ENCODE measurements at regions of chr1 and their contacts with region 1.

Region 1: DNA sequence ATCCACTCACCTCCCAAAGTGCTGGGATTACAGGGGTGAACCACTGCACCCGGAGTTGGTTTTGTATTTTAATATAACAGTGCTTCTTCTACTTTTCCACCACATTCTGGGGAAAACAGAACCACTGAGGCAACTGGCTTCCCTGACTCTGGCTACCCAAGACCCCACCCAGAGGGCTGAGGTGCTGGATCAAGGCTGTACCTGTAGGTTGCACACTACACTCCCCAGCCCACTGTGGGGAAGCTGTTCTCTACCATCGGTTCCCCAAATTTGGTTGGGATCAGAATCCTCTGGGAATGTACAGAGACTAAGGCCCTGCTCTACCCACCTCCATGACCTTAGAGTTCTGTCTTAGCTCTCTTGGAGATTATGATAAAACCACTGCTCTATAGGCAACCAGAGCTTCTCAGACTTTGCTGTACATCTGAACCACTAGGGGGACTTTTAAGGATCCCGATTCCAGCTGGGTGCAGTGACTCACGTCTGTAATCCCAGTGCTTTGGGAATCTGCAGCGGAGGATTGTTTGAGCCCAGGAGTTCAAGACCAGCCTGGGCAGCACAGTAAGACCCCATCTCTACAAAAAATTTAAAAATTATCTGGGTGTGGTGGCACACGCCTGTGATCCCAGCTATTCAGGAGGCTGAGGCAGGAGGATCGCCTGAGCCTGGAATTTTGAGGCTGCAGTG is 51.6 kb downstream of the GNG4 start:
- DNase-seq: no peak
- H3K4me3 ChIP-seq: no peak overlapping the region
- H3K27ac ChIP-seq: no peak overlapping the region
- H3K4me1 ChIP-seq: peaks cover 0 to 9% (median 0%) of the 10 kb centered on the region in 4 experiments; a peak in 2 of 7 replicates
- H3K27me3 ChIP-seq: no peaks in the 10 kb centered on the region
- CTCF ChIP-seq: peak in 2 of 3 experiments; percentile 25 to 48; a peak in 3 of 4 replicates
- EP300 ChIP-seq: no peak
- POLR2A ChIP-seq: no peak
- RAD21 ChIP-seq: peak in 1 of 2 experiments; percentile 34; a peak in 2 of 4 replicates

Region 2: DNA sequence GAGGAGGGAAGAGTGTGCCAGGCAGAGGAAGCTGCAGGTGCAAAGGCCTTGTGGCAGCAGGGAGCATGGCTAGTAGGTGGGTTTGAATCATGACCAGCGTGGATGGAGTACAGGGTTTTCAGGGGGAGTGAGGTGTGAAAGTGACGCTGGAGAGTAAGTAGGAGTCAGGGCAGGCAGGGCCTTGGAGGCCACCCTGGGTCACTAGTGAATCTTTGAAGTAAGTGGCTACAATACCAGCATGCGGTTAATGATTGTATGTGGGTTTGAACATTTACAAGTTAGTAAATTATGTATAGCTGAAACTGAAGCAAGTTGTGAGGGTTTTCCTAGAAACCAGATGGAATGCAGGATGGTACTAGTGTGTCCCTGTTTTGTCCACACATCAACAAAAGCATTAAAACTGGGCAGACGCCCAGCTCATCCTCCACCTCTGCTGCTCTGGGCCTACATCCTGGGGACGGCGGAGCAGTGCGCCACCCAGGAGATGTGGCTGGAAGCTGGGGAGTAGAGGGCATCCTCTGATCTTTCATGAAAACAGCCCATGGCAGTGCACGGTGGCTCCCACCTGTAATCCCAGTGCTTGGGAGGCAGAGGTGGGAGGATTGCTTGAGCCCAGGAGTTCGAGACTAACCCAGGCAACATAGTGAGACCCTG is 52.6 kb before region 1 on chr1:
- CTCF ChIA-PET with region 1: interaction called, 19 read pairs
- POLR2A ChIA-PET with region 1: no interaction called
- DNase-seq: no peak
- H3K4me3 ChIP-seq: no peak overlapping the region
- H3K27ac ChIP-seq: no peak overlapping the region
- H3K4me1 ChIP-seq: peaks cover 3 to 7% (median 5%) of the 10 kb centered on the region in 4 experiments
- H3K27me3 ChIP-seq: no peaks in the 10 kb centered on the region
- CTCF ChIP-seq: no peak
- EP300 ChIP-seq: no peak
- POLR2A ChIP-seq: no peak
- RAD21 ChIP-seq: no peak

Region 3: DNA sequence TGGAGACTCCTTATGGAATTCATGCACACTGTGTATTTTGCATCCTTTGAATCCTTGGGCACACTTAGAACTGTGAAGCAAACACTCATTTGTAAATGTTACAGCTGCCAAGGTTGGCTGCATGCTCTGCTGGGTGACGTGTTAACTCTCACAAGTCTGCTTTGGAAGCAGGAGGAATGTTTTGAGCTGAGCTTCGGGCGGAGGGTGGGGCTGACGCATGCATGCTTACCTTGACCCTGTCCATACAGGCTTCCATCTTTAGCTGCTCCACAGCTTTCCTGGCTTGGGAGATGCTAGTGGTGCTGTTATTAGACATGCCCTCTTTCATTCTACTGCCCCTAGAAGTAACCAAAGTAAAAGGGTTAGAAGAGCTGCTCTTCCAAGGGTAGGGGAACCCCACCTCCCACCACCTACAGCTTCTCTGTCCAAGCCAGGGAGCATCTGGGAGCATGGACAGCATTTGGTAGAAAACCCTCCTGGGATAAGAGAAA is 14.5 kb before region 1 on chr1:
- CTCF ChIA-PET with region 1: interaction called, 77 read pairs
- POLR2A ChIA-PET with region 1: no interaction called
- DNase-seq: no peak
- H3K4me3 ChIP-seq: no peak overlapping the region
- H3K27ac ChIP-seq: no peak overlapping the region
- H3K4me1 ChIP-seq: no peaks in the 10 kb centered on the region
- H3K27me3 ChIP-seq: no peaks in the 10 kb centered on the region
- CTCF ChIP-seq: no peak
- EP300 ChIP-seq: no peak
- POLR2A ChIP-seq: no peak
- RAD21 ChIP-seq: no peak

Region 4: GRCh38 chr1:235642011-235642942 is 44.3 kb after region 1 on chr1:
- CTCF ChIA-PET with region 1: interaction called, 34 read pairs
- POLR2A ChIA-PET with region 1: no interaction called
- DNase-seq: peak in 1 of 2 experiments; percentile 60
- H3K4me3 ChIP-seq: peak overlapping the region in 2 of 4 experiments; percentile 5 to 11; a peak in 2 of 8 replicates
- H3K27ac ChIP-seq: peak overlapping the region; percentile 75
- H3K4me1 ChIP-seq: peaks cover 18 to 43% (median 29%) of the 10 kb centered on the region in 4 experiments
- H3K27me3 ChIP-seq: no peaks in the 10 kb centered on the region
- CTCF ChIP-seq: no peak
- EP300 ChIP-seq: no peak
- POLR2A ChIP-seq: peak in 1 of 2 experiments; percentile 43; a peak in 1 of 3 replicates
- RAD21 ChIP-seq: no peak

Region 5: GRCh38 chr1:235734335-235734734 is 136.3 kb after region 1 on chr1:
- CTCF ChIA-PET with region 1: interaction called, 80 read pairs
- POLR2A ChIA-PET with region 1: interaction called, 3 read pairs
- DNase-seq: no peak
- H3K4me3 ChIP-seq: no peak overlapping the region
- H3K27ac ChIP-seq: no peak overlapping the region
- H3K4me1 ChIP-seq: no peaks in the 10 kb centered on the region
- H3K27me3 ChIP-seq: no peaks in the 10 kb centered on the region
- CTCF ChIP-seq: no peak
- EP300 ChIP-seq: no peak
- POLR2A ChIP-seq: no peak
- RAD21 ChIP-seq: no peak

Region 6: GRCh38 chr1:235802947-235803346 is 204.9 kb after region 1 on chr1:
- CTCF ChIA-PET with region 1: no interaction called
- POLR2A ChIA-PET with region 1: no interaction called
- DNase-seq: no peak
- H3K4me3 ChIP-seq: no peak overlapping the region
- H3K27ac ChIP-seq: no peak overlapping the region
- H3K4me1 ChIP-seq: no peaks in the 10 kb centered on the region
- H3K27me3 ChIP-seq: no peaks in the 10 kb centered on the region
- CTCF ChIP-seq: no peak
- EP300 ChIP-seq: no peak
- POLR2A ChIP-seq: no peak
- RAD21 ChIP-seq: no peak

Region 7: DNA sequence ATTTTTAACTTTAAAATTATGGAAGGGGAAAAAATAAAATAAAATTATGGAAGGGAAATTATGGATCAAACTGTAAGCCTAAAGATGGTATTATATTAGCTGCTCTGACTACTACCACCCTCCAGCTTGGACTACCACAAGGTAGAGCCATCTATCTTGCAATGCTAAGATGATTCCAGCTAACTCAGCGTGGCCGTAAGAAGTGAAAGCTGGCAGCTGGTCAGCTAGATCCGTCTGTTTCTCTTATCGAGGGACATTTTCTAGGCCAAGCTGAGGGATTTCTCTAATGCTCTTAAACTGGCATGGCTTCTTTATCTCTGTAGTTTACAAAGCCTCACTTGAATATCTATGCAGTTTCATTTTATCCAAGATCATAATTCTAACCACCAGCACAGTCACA is 237.2 kb after region 1 on chr1:
- CTCF ChIA-PET with region 1: no interaction called
- POLR2A ChIA-PET with region 1: no interaction called
- DNase-seq: no peak
- H3K4me3 ChIP-seq: no peak overlapping the region
- H3K27ac ChIP-seq: no peak overlapping the region
- H3K4me1 ChIP-seq: no peaks in the 10 kb centered on the region
- H3K27me3 ChIP-seq: no peaks in the 10 kb centered on the region
- CTCF ChIP-seq: no peak
- EP300 ChIP-seq: no peak
- POLR2A ChIP-seq: no peak
- RAD21 ChIP-seq: no peak

Measured in H1 (cell line).